CD4-positive, alpha-beta memory T cell (primary cell): ENCODE measurements at regions of chr12 and their contacts with region 1.

Region 1: DNA sequence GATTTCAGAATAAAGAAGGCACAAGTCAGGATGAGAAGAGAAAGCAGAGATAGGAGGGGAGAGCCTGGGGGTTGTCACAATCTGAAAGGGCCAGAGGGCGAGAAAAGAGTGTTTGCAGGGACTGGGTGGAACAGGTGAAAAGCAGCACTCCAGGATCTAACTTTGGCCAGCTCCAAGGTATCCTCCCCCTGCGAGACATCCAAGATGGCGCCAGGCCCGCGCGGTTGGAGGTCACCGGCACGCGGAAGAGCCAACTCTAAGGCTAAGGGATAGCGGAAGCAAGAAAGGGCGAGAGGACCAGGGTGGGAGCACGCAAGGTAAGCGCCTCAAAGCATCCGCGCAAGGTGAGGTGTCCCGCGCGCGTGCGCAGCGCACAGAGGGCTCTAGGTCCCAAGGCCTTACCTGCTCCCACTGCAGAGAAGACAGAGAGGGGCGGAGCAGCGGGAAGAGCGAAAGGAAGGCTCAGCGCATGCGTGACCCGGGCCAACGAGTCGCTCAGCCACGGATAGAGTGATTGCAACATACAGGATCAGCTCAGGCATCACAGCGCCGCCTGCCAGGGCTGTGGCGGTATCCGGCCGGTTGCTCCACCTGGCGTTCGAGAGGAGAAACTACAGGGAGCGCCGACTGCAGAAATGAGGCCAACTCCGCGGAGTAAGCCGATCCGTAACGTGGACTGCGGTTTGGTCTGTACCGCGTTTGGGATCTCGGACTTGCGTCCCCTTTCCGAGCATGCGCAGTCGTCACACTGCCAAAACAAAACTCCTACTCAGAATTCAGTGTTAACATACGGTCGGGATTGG is at the start of gene ATP5MC2:
- DNase-seq: peak; percentile 96 to 98 (median 98)
- H3K4me3 ChIP-seq: peak within 1 kb of the TSS; percentile 82 to 89
- H3K4me3 Mint-ChIP-seq: peak within 1 kb of the TSS; percentile 91 to 98 (median 95)
- H3K27ac ChIP-seq: peak within 1 kb of the TSS; percentile 59
- H3K27ac Mint-ChIP-seq: peak within 1 kb of the TSS; percentile 93 to 98 (median 97)
- H3K4me1 ChIP-seq: peaks cover 36% of the 10 kb centered on the region
- H3K4me1 Mint-ChIP-seq: peaks cover 18 to 40% (median 31%) of the 10 kb centered on the region in 4 donors
- H3K27me3 ChIP-seq: peaks cover 8% of the 10 kb centered on the region
- H3K27me3 Mint-ChIP-seq: peaks cover 15% of the 10 kb centered on the region in 2 donors
- total RNA-seq, gene ATP5MC2: 238 to 246 TPM

Region 2: DNA sequence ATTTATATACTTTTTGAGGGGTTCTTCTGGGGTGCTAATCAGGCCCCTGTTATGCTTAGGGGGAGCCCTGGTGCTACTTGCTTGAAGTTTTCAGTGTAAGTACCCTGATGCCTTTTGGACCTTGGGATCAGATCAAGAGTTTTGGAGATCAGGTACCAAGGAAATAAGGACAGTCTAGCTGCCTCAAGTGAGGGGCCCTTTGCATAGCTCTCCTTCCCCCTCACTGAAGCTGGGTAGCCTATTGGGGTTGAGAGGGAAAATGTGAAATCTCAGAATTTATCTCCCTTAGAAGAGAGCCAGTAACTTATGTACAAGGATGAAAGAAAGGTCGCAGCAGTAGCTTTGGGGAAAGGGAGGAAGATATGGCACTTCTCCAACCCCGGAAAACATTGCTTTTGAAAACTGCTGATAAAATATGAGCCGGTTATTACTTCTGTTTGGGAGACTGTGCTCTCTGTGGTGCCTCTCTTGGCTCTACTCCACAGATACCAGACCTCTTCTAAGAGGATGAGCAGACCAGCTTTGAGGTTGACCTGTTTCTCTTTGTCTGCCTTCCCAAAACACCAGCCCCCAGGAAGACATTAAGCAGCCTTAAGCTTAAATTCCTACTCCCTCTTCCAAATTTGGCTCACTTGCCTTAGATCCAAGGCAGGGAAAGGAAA is 261.0 kb before region 1 on chr12:
- CTCF ChIA-PET with region 1: no interaction called
- POLR2A ChIA-PET with region 1: no interaction called
- intact Hi-C with region 1: no loop called
- DNase-seq: no peak
- H3K4me3 ChIP-seq: no peak overlapping the region
- H3K4me3 Mint-ChIP-seq: no peak overlapping the region
- H3K27ac ChIP-seq: no peak overlapping the region
- H3K27ac Mint-ChIP-seq: peak overlapping the region; percentile 13 to 86 (median 48)
- H3K4me1 ChIP-seq: peaks cover 29% of the 10 kb centered on the region
- H3K4me1 Mint-ChIP-seq: peaks cover 26 to 43% (median 32%) of the 10 kb centered on the region in 4 donors
- H3K27me3 ChIP-seq: no peaks in the 10 kb centered on the region
- H3K27me3 Mint-ChIP-seq: no peaks in the 10 kb centered on the region

Region 3: DNA sequence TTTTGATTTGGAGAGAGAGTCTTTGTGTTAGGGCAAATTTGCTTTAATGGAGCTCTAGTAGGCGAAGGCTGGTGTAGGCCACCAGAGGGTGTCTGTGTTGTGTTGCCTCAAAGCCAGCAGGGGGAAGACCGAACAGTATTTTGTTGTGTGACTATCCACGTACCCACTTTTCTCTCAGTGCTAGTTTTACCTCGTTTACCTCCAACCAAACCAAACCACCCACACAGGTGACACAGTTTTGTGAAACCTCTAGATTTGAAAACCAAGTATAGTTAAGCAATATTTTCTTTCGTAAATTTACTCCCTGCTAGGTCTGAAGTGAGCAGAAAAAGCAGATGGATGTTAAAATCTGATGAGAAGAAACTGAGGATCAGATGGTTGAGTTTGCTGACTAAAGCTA is 132.3 kb before region 1 on chr12:
- CTCF ChIA-PET with region 1: interaction called, 21 read pairs
- POLR2A ChIA-PET with region 1: interaction called, 9 read pairs
- intact Hi-C with region 1: no loop called
- DNase-seq: peak; percentile 47 to 56 (median 52)
- H3K4me3 ChIP-seq: no peak overlapping the region
- H3K4me3 Mint-ChIP-seq: no peak overlapping the region
- H3K27ac ChIP-seq: no peak overlapping the region
- H3K27ac Mint-ChIP-seq: peak overlapping the region in 6 of 7 donors; percentile 74 to 91 (median 82)
- H3K4me1 ChIP-seq: peaks cover 12% of the 10 kb centered on the region
- H3K4me1 Mint-ChIP-seq: peaks cover 7 to 10% (median 9%) of the 10 kb centered on the region in 4 donors
- H3K27me3 ChIP-seq: no peaks in the 10 kb centered on the region
- H3K27me3 Mint-ChIP-seq: no peaks in the 10 kb centered on the region

Region 4: GRCh38 chr12:53625946-53626701 is 49.7 kb before region 1 on chr12 and contains the start of gene ATF7:
- CTCF ChIA-PET with region 1: interaction called, 13 read pairs
- POLR2A ChIA-PET with region 1: interaction called, 38 read pairs
- intact Hi-C with region 1: loop called (anchors 1 kb)
- DNase-seq: peak; percentile 97 to 100 (median 98)
- H3K4me3 ChIP-seq: peak within 1 kb of the TSS; percentile 84 to 96
- H3K4me3 Mint-ChIP-seq: peak within 1 kb of the TSS; percentile 98 to 99 (median 98)
- H3K27ac ChIP-seq: peak within 1 kb of the TSS; percentile 83
- H3K27ac Mint-ChIP-seq: peak within 1 kb of the TSS; percentile 89 to 99 (median 98)
- H3K4me1 ChIP-seq: peaks cover 37% of the 10 kb centered on the region
- H3K4me1 Mint-ChIP-seq: peaks cover 35 to 57% (median 46%) of the 10 kb centered on the region in 4 donors
- H3K27me3 ChIP-seq: no peaks in the 10 kb centered on the region
- H3K27me3 Mint-ChIP-seq: no peaks in the 10 kb centered on the region
- total RNA-seq, gene ATF7: 26.8 to 35.8 TPM

Region 5: GRCh38 chr12:53631721-53632120 is 44.1 kb before region 1 on chr12:
- CTCF ChIA-PET with region 1: interaction called, 13 read pairs
- POLR2A ChIA-PET with region 1: interaction called, 38 read pairs
- intact Hi-C with region 1: loop called (anchors 1 kb)
- DNase-seq: no peak
- H3K4me3 ChIP-seq: no peak overlapping the region
- H3K4me3 Mint-ChIP-seq: no peak overlapping the region
- H3K27ac ChIP-seq: no peak overlapping the region
- H3K27ac Mint-ChIP-seq: no peak overlapping the region
- H3K4me1 ChIP-seq: peaks cover 5% of the 10 kb centered on the region
- H3K4me1 Mint-ChIP-seq: peaks cover 4 to 5% (median 5%) of the 10 kb centered on the region in 4 donors
- H3K27me3 ChIP-seq: no peaks in the 10 kb centered on the region
- H3K27me3 Mint-ChIP-seq: no peaks in the 10 kb centered on the region

Region 6: GRCh38 chr12:53696285-53696654 is 20.4 kb after region 1 on chr12:
- CTCF ChIA-PET with region 1: interaction called, 4 read pairs
- POLR2A ChIA-PET with region 1: interaction called, 5 read pairs
- intact Hi-C with region 1: loop called (anchors 2 kb)
- DNase-seq: no peak
- H3K4me3 ChIP-seq: no peak overlapping the region
- H3K4me3 Mint-ChIP-seq: peak overlapping the region in 7 of 8 donors; percentile 11 to 85 (median 59)
- H3K27ac ChIP-seq: no peak overlapping the region
- H3K27ac Mint-ChIP-seq: peak overlapping the region in 2 of 7 donors; percentile 31 to 38
- H3K4me1 ChIP-seq: peaks cover 23% of the 10 kb centered on the region
- H3K4me1 Mint-ChIP-seq: peaks cover 21 to 39% (median 29%) of the 10 kb centered on the region in 4 donors
- H3K27me3 ChIP-seq: peaks cover 45% of the 10 kb centered on the region
- H3K27me3 Mint-ChIP-seq: peaks cover 58 to 74% of the 10 kb centered on the region in 2 donors